A673 (cell line): ENCODE measurements at regions of chr1 and their contacts with region 1.

Region 1: GRCh38 chr1:212608209-212608955 is at the start of gene ATF3:
- DNase-seq: peak; percentile 99
- H3K4me3 ChIP-seq: peak within 1 kb of the TSS; percentile 75
- H3K27ac ChIP-seq: peak within 1 kb of the TSS; percentile 86
- H3K4me1 ChIP-seq: peaks cover 62% of the 10 kb centered on the region
- H3K27me3 ChIP-seq: peaks cover 48% of the 10 kb centered on the region
- CTCF ChIP-seq: no peak
- total RNA-seq, gene ATF3: 12.6 and 16.0 TPM in 2 replicates

Region 2: GRCh38 chr1:212147581-212148033 is 460.8 kb before region 1 on chr1:
- CTCF ChIA-PET with region 1: no interaction called
- POLR2A ChIA-PET with region 1: no interaction called
- intact Hi-C with region 1: no loop called
- DNase-seq: no peak
- H3K4me3 ChIP-seq: no peak overlapping the region
- H3K27ac ChIP-seq: no peak overlapping the region
- H3K4me1 ChIP-seq: no peaks in the 10 kb centered on the region
- H3K27me3 ChIP-seq: no peaks in the 10 kb centered on the region
- CTCF ChIP-seq: no peak

Region 3: DNA sequence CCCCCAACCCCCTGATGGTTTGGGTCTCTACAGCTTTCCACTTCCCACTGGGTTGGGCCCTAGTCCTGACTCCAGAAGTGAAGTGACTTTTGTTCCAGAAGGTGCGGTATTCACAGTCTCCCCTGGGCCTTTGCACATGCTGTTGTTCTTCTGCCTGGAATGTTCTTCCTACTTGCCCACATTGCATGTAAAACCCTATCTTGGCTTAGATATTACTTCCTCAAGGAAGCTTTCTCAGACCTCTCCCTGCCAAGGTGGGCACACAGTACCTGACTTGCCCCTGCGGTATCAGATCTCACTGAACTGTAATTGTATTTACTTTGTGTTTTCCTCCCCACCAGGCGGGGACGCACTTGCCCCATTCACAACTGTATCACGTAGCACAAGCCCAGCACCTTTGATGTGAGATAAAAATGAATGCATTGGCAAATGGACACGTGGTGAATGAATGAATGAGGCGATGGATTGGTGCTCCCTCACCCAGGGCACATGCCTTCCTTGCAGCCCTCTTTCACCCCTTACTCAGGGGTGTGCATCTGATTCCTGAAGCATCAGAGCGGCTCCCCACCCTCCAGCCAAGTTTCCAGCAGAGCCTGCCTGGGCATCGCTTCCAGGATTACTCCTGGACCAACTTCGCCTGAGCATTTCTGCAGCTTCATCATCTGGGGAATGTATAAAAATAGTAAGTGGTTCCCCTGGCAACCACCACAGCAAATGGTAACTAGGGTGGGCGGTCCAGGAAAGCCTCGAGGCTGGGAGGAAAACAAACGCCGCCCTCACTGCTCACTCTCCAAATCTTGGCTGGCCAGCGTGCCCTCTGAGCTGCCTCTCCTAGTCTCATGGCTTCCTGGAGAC is 155.8 kb before region 1 on chr1:
- CTCF ChIA-PET with region 1: no interaction called
- POLR2A ChIA-PET with region 1: no interaction called
- intact Hi-C with region 1: no loop called
- DNase-seq: no peak
- H3K4me3 ChIP-seq: no peak overlapping the region
- H3K27ac ChIP-seq: no peak overlapping the region
- H3K4me1 ChIP-seq: no peaks in the 10 kb centered on the region
- H3K27me3 ChIP-seq: no peaks in the 10 kb centered on the region
- CTCF ChIP-seq: no peak

Region 4: GRCh38 chr1:212477014-212477679 is 131.2 kb before region 1 on chr1:
- CTCF ChIA-PET with region 1: interaction called, 3 read pairs
- POLR2A ChIA-PET with region 1: no interaction called
- intact Hi-C with region 1: loop called (anchors 5 kb)
- DNase-seq: peak; percentile 88
- H3K4me3 ChIP-seq: no peak overlapping the region
- H3K27ac ChIP-seq: no peak overlapping the region
- H3K4me1 ChIP-seq: no peaks in the 10 kb centered on the region
- H3K27me3 ChIP-seq: no peaks in the 10 kb centered on the region
- CTCF ChIP-seq: peak; percentile 91

Region 5: DNA sequence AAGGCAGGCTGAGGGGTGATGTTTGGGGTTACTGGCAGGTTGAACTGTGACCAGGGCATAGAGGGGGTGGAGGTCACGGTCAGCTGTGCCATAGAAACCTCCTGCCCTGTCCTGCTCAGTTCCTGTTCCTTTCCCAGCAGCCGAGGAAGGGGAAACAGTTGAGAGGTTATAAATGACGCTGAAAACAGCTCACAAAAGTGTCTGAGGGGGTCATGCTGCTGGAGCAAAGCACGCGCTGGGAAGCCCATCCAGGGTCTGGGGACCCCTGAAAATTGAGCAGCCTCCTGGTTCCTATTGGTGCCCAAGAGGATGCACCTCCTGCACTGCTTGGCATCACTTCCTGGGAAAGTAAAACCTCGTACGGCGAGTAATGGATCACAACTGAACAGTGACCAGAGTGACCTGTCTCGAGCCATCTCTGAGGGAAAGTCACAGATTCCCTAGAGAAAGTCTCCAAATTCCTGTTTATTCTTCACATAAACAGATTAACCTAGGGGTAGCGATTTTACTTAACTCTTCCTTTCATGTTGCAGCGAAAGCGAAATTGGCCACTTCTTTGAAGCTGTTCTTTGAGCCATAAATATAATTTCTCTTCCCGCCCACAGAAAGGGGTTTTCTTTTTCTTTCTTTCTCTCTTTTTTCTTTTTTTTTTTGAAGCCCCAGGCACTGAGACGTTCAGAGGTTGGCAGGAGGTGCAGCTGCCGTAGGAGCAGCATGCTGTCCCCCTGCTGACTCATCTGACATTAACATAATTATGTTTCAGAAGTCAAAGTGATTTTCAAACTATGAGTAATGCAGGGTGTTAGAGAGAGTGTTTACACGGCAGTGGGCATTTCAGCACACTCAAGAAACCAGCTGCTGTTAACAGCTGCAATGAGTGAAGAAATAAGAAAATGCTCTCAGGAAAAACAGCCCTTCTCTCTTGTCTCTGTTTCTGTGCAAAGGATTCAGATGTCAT is 41.6 kb before region 1 on chr1:
- CTCF ChIA-PET with region 1: interaction called, 3 read pairs
- POLR2A ChIA-PET with region 1: interaction called, 15 read pairs
- intact Hi-C with region 1: no loop called
- DNase-seq: peak; percentile 87
- H3K4me3 ChIP-seq: peak overlapping the region; percentile 39
- H3K27ac ChIP-seq: peak overlapping the region; percentile 48
- H3K4me1 ChIP-seq: peaks cover 15% of the 10 kb centered on the region
- H3K27me3 ChIP-seq: no peaks in the 10 kb centered on the region
- CTCF ChIP-seq: no peak

Region 6: DNA sequence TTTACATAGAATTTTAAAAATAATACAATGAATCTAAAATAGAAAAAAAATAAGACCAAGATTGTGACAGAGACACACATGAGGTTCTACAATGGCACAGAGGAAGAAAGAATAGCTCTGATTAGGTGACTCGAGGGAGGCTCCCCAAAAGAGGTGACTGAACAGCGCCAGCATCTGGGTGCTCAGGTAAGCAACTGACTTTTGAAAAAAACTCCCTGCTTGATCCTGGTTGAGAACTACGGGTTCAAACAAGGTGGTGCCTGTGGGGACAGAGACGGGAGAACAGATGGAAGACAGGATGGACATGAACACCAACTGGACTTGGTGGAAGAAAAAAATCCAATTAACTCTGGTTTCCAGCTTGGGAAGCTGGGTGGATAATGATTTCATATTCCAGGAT is 68.8 kb after region 1 on chr1:
- CTCF ChIA-PET with region 1: no interaction called
- POLR2A ChIA-PET with region 1: interaction called, 23 read pairs
- intact Hi-C with region 1: no loop called
- DNase-seq: no peak
- H3K4me3 ChIP-seq: no peak overlapping the region
- H3K27ac ChIP-seq: no peak overlapping the region
- H3K4me1 ChIP-seq: no peaks in the 10 kb centered on the region
- H3K27me3 ChIP-seq: no peaks in the 10 kb centered on the region
- CTCF ChIP-seq: no peak

Region 7: DNA sequence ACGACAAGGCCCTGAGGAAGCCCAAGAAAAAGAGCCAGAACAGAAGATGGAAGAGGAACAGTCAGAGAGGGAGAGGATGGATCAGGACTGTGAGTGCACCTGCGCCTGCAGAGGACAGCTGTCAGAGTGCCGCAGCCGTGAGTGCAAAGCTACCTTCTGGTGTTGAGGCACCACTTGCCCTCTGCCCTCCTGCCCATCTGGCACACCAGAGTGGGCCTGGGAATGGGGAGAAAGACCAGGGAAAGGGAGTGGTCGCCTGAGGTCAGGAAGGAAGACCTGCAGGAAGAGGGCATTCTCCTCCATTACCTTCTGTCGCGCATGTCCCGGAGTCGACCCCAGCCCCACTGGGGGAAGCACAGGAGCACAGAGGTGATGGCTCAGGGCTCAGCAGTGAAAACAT is 368.2 kb after region 1 on chr1:
- CTCF ChIA-PET with region 1: no interaction called
- POLR2A ChIA-PET with region 1: interaction called, 10 read pairs
- intact Hi-C with region 1: no loop called
- DNase-seq: no peak
- H3K4me3 ChIP-seq: no peak overlapping the region
- H3K27ac ChIP-seq: no peak overlapping the region
- H3K4me1 ChIP-seq: no peaks in the 10 kb centered on the region
- H3K27me3 ChIP-seq: no peaks in the 10 kb centered on the region
- CTCF ChIP-seq: no peak

Region 8: DNA sequence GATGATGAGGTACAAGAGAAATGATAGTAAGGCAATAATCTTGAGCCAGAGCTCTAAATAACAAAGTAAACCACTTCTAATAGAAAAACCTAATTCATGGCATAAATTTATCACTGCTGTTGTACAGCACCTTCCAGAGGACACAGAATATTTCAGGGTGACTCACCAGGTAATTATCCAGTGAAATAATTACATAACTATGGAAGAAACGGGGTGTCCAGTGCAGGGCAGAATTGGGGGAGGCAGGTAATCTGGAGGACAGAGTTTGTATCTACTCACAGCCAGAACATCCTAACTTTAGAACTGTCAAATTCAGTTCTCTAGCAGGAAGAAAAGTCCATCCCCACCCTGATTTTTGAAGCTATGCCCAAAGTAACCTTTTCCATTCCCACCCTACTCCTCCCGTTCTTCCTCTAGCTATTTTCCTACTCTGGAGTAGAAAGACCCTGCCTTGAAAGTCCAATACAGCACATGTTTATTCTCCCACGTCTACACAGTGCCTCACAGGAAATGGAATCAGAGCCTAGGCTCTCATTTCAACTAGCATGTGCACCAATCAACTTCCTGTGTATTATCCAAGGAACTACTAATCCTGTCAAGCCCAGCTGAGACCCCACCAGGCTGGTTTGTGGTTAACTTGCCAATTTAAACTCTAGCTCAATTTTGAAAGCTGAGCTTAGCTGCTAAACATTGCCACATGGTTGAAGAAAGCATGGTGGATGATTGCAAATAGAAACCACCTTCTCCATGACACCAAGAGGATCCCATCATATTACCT is 1846.4 kb after region 1 on chr1:
- CTCF ChIA-PET with region 1: no interaction called
- POLR2A ChIA-PET with region 1: interaction called, 14 read pairs
- intact Hi-C with region 1: no loop called
- DNase-seq: peak; percentile 98
- H3K4me3 ChIP-seq: peak overlapping the region; percentile 15
- H3K27ac ChIP-seq: peak overlapping the region; percentile 80
- H3K4me1 ChIP-seq: peaks cover 68% of the 10 kb centered on the region
- H3K27me3 ChIP-seq: no peaks in the 10 kb centered on the region
- CTCF ChIP-seq: no peak